ENCODE measurements at regions of chr16 and their contacts with region 1.

Region 1: GRCh38 chr16:12819126-12820117 is 15.7 kb upstream of the CPPED1 start:
- DNase-seq: peak; percentile 81
- H3K4me3 ChIP-seq: no peak overlapping the region
- H3K27ac ChIP-seq: no peak overlapping the region
- H3K4me1 ChIP-seq: peaks cover 15% of the 10 kb centered on the region
- CTCF ChIP-seq: peak; percentile 94

Region 2: DNA sequence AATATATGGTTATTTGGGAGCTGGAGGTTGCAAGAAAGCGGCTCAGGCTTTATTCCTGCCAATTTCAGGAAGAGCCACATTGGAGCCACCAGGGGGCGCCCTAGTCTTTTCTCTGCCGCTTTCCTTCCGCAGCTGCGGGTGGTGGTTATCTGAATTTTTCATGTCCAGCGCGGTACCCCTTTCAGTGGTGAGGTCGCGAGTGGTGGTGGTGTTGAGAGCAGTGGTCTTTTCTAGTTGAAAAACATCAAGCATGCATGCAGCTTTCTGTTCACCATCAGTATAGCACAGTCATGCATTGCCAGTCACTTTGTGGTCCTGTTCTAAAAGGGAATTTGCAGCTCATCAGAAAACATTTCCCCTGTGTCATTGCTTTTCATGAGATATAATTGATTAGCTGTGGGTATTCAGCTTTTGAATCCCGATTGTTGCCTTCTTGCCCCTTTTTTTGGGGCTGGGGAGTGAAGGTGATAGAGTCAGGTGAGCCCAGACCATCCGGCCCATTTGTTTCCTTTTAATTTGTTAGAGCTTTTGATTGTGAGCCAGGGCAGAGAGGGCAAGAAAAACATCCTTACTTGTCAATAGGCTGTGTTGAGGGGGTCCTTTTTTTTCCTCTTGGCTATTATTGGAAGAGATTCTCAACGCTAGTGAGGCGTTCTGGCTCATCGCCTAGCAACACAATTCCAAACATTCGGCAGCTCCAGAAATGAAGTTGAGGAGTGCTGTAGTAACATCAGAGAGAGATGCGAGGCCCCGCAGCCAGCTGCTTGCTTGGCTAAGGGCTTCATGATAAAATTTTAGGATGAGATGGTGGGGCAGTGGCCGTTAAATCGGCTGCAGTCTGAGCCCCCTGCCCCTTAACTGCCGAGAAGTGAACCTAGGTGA is 723.9 kb before region 1 on chr16:
- CTCF ChIA-PET with region 1: no interaction called
- POLR2A ChIA-PET with region 1: no interaction called
- intact Hi-C with region 1: loop called (anchors 5 kb)
- DNase-seq: peak; percentile 79
- H3K4me3 ChIP-seq: no peak overlapping the region
- H3K27ac ChIP-seq: no peak overlapping the region
- H3K4me1 ChIP-seq: peaks cover 30% of the 10 kb centered on the region
- CTCF ChIP-seq: peak; percentile 100

Region 3: GRCh38 chr16:12340151-12340733 is 479.2 kb before region 1 on chr16:
- CTCF ChIA-PET with region 1: no interaction called
- POLR2A ChIA-PET with region 1: no interaction called
- intact Hi-C with region 1: loop called (anchors 2 kb)
- DNase-seq: peak; percentile 67
- H3K4me3 ChIP-seq: no peak overlapping the region
- H3K27ac ChIP-seq: no peak overlapping the region
- H3K4me1 ChIP-seq: peaks cover 61% of the 10 kb centered on the region
- CTCF ChIP-seq: peak; percentile 89

Region 4: GRCh38 chr16:12546918-12547607 is 272.4 kb before region 1 on chr16:
- CTCF ChIA-PET with region 1: no interaction called
- POLR2A ChIA-PET with region 1: no interaction called
- intact Hi-C with region 1: loop called (anchors 5 kb)
- DNase-seq: peak; percentile 86
- H3K4me3 ChIP-seq: peak overlapping the region; percentile 64
- H3K27ac ChIP-seq: peak overlapping the region; percentile 98
- H3K4me1 ChIP-seq: peaks cover 100% of the 10 kb centered on the region
- CTCF ChIP-seq: no peak

Region 5: DNA sequence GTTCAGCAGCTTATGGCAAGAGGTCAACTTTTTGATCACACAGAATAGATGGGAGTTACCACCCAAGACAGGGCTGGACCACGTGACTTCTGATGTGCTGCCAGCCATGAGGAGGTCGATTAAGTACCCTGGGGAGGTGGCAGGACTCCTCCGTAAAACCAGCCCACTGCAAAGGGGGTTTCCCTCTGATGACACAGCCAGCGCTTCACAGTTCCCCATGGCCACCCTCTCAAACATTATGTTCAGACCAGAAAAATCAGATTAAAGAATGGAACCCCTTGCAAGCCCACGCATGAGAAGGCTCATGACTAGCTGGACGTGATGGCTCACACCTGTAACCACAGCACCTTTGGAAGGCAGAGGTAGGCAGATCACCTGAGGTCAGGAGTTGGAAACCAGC is 238.6 kb before region 1 on chr16:
- CTCF ChIA-PET with region 1: no interaction called
- POLR2A ChIA-PET with region 1: interaction called, 11 read pairs
- intact Hi-C with region 1: loop called (anchors 2 kb)
- DNase-seq: no peak
- H3K4me3 ChIP-seq: no peak overlapping the region
- H3K27ac ChIP-seq: no peak overlapping the region
- H3K4me1 ChIP-seq: peaks cover 27% of the 10 kb centered on the region
- CTCF ChIP-seq: no peak

Region 6: GRCh38 chr16:12803203-12804097 is 16.0 kb before region 1 on chr16 and contains the start of gene CPPED1:
- CTCF ChIA-PET with region 1: interaction called, 3 read pairs
- POLR2A ChIA-PET with region 1: interaction called, 12 read pairs
- intact Hi-C with region 1: no loop called
- DNase-seq: peak; percentile 95
- H3K4me3 ChIP-seq: peak within 1 kb of the TSS; percentile 86
- H3K27ac ChIP-seq: peak within 1 kb of the TSS; percentile 77
- H3K4me1 ChIP-seq: peaks cover 21% of the 10 kb centered on the region
- CTCF ChIP-seq: no peak
- total RNA-seq, gene CPPED1: 8.6 and 9.4 TPM in 2 replicates

Region 7: GRCh38 chr16:12927591-12927990 is 108.2 kb after region 1 on chr16:
- CTCF ChIA-PET with region 1: no interaction called
- POLR2A ChIA-PET with region 1: no interaction called
- intact Hi-C with region 1: no loop called
- DNase-seq: no peak
- H3K4me3 ChIP-seq: no peak overlapping the region
- H3K27ac ChIP-seq: no peak overlapping the region
- H3K4me1 ChIP-seq: no peaks in the 10 kb centered on the region
- CTCF ChIP-seq: no peak

Measured in OCI-LY7 (cell line).